CD4-positive, alpha-beta memory T cell (primary cell): ENCODE measurements at regions of chr20 and their contacts with region 1.

Region 1: GRCh38 chr20:52127309-52127708 is 64.3 kb downstream of the ZFP64 start:
- DNase-seq: no peak
- H3K4me3 ChIP-seq: no peak overlapping the region
- H3K4me3 Mint-ChIP-seq: no peak overlapping the region
- H3K27ac ChIP-seq: no peak overlapping the region
- H3K27ac Mint-ChIP-seq: peak overlapping the region in 1 of 7 donors; percentile 25
- H3K4me1 ChIP-seq: no peaks in the 10 kb centered on the region
- H3K4me1 Mint-ChIP-seq: peaks cover 0 to 4% (median 3%) of the 10 kb centered on the region in 4 donors
- H3K27me3 ChIP-seq: no peaks in the 10 kb centered on the region
- H3K27me3 Mint-ChIP-seq: peaks cover 0 to 1% of the 10 kb centered on the region in 2 donors

Region 2: DNA sequence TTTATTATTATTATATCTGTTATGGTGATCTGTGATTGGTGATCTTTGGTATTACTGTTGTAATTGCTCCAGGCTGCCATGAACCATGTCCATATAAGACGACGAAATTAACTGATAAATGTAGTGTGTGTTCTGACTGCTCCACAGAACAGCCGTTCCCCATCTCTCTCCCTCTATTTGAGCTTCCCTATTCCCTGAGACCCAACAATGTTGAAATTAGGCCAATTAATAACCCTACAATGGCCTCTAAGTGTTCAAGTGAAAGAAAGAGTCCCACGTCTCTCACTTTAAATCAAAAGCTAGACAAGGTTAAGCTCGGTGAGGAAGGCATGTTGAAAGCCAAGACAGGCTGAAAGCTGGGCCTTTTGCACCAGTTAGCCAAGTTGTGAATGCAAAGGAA is 12.7 kb after region 1 on chr20:
- CTCF ChIA-PET with region 1: interaction called, 21 read pairs
- POLR2A ChIA-PET with region 1: no interaction called
- intact Hi-C with region 1: no loop called
- DNase-seq: no peak
- H3K4me3 ChIP-seq: no peak overlapping the region
- H3K4me3 Mint-ChIP-seq: no peak overlapping the region
- H3K27ac ChIP-seq: no peak overlapping the region
- H3K27ac Mint-ChIP-seq: no peak overlapping the region
- H3K4me1 ChIP-seq: no peaks in the 10 kb centered on the region
- H3K4me1 Mint-ChIP-seq: peaks cover 0 to 2% (median 0%) of the 10 kb centered on the region in 4 donors
- H3K27me3 ChIP-seq: no peaks in the 10 kb centered on the region
- H3K27me3 Mint-ChIP-seq: no peaks in the 10 kb centered on the region

Region 3: GRCh38 chr20:52145587-52145986 is 18.3 kb after region 1 on chr20:
- CTCF ChIA-PET with region 1: interaction called, 21 read pairs
- POLR2A ChIA-PET with region 1: no interaction called
- intact Hi-C with region 1: loop called (anchors 1 kb)
- DNase-seq: no peak
- H3K4me3 ChIP-seq: no peak overlapping the region
- H3K4me3 Mint-ChIP-seq: no peak overlapping the region
- H3K27ac ChIP-seq: no peak overlapping the region
- H3K27ac Mint-ChIP-seq: no peak overlapping the region
- H3K4me1 ChIP-seq: no peaks in the 10 kb centered on the region
- H3K4me1 Mint-ChIP-seq: peaks cover 0 to 2% (median 0%) of the 10 kb centered on the region in 4 donors
- H3K27me3 ChIP-seq: no peaks in the 10 kb centered on the region
- H3K27me3 Mint-ChIP-seq: no peaks in the 10 kb centered on the region

Region 4: GRCh38 chr20:52150440-52151258 is 23.3 kb after region 1 on chr20:
- CTCF ChIA-PET with region 1: interaction called, 21 read pairs
- POLR2A ChIA-PET with region 1: no interaction called
- intact Hi-C with region 1: loop called (anchors 1 kb)
- DNase-seq: peak in 4 of 5 donors; percentile 8 to 26 (median 20)
- H3K4me3 ChIP-seq: no peak overlapping the region
- H3K4me3 Mint-ChIP-seq: no peak overlapping the region
- H3K27ac ChIP-seq: no peak overlapping the region
- H3K27ac Mint-ChIP-seq: no peak overlapping the region
- H3K4me1 ChIP-seq: no peaks in the 10 kb centered on the region
- H3K4me1 Mint-ChIP-seq: no peaks in the 10 kb centered on the region
- H3K27me3 ChIP-seq: no peaks in the 10 kb centered on the region
- H3K27me3 Mint-ChIP-seq: no peaks in the 10 kb centered on the region

Region 5: GRCh38 chr20:52251136-52251700 is 123.9 kb after region 1 on chr20:
- CTCF ChIA-PET with region 1: no interaction called
- POLR2A ChIA-PET with region 1: no interaction called
- intact Hi-C with region 1: no loop called
- DNase-seq: no peak
- H3K4me3 ChIP-seq: no peak overlapping the region
- H3K4me3 Mint-ChIP-seq: no peak overlapping the region
- H3K27ac ChIP-seq: no peak overlapping the region
- H3K27ac Mint-ChIP-seq: no peak overlapping the region
- H3K4me1 ChIP-seq: no peaks in the 10 kb centered on the region
- H3K4me1 Mint-ChIP-seq: no peaks in the 10 kb centered on the region
- H3K27me3 ChIP-seq: no peaks in the 10 kb centered on the region
- H3K27me3 Mint-ChIP-seq: peaks cover 2 to 3% of the 10 kb centered on the region in 2 donors

Region 6: DNA sequence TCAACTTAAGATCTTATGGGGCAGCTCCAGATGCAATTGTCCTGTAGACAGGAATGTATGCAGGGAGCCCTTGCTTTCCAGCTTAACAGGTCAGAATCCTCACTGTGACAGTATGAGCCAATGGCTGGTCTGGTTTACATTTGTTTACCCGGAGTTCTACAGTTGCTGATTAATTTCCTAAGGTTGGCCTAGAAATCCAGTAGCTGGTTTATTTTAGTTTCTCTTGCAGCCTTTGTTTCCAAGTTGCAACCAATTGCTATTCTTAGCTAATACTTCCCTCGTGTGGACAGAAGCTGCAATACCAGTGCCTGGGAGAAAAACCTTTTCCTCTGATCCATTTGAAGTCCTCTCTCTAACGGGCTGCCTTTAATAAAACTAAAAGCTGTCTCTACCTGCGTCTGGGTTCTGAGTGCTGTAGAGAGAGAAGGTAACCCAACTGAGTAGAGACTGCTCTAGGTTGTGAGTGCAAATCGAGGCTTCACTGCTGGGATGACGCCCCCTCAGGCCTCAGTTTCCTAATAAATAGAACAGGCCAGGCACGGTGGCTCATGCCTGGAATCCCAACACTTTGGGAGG is 1420.4 kb after region 1 on chr20:
- CTCF ChIA-PET with region 1: interaction called, 10 read pairs
- POLR2A ChIA-PET with region 1: no interaction called
- intact Hi-C with region 1: loop called (anchors 2 kb)
- DNase-seq: peak in 4 of 5 donors; percentile 29 to 37 (median 34)
- H3K4me3 ChIP-seq: no peak overlapping the region
- H3K4me3 Mint-ChIP-seq: no peak overlapping the region
- H3K27ac ChIP-seq: no peak overlapping the region
- H3K27ac Mint-ChIP-seq: no peak overlapping the region
- H3K4me1 ChIP-seq: no peaks in the 10 kb centered on the region
- H3K4me1 Mint-ChIP-seq: peaks cover 0 to 4% (median 0%) of the 10 kb centered on the region in 4 donors
- H3K27me3 ChIP-seq: no peaks in the 10 kb centered on the region
- H3K27me3 Mint-ChIP-seq: no peaks in the 10 kb centered on the region